PC-9 (cell line): ENCODE measurements at regions of chr20 and their contacts with region 1.

Region 1: DNA sequence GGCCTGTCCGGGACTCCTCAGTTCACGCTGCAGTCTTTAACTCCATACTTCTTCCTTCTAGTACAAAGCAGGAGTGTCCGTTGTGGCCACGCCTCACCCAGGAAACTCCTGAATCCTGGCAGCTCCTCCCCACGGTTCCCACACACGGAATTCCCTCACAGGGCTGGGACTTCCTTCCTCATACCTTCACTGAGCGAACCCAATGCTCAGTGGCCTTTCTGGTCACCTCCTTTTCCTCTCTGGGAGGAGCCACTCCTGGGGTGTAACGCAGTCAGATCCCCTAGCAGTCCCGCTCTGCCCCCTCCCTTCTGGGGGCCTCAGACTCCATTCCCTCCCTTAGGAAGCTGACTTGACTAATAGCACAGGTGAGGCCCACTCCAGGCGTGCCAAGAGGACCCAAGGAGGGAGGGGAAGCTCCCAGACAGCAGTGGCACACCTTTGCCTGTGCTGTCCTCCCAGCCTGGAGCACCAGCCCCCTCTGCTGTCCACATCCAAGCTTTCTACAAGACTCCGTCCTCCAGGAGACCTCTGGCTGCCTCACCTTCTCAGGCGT is at the start of gene SLC52A3:
- DNase-seq: peak; percentile 94 to 97
- H3K4me3 ChIP-seq: peak within 1 kb of the TSS; percentile 53
- H3K27ac ChIP-seq: peak within 1 kb of the TSS; percentile 70
- H3K4me1 ChIP-seq: peaks cover 35% of the 10 kb centered on the region
- H3K27me3 ChIP-seq: no peaks in the 10 kb centered on the region
- CTCF ChIP-seq: peak; percentile 83
- total RNA-seq, gene SLC52A3: 6.9 and 7.2 TPM in 2 replicates

Region 2: GRCh38 chr20:266596-267562 is 501.6 kb before region 1 on chr20:
- CTCF ChIA-PET with region 1: interaction called, 14 read pairs
- POLR2A ChIA-PET with region 1: no interaction called
- intact Hi-C with region 1: no loop called
- DNase-seq: peak; percentile 52 to 86
- H3K4me3 ChIP-seq: peak overlapping the region; percentile 30; the same call in 1 of the 2 replicates
- H3K27ac ChIP-seq: no peak overlapping the region
- H3K4me1 ChIP-seq: no peaks in the 10 kb centered on the region; the same call in 1 of the 2 replicates
- H3K27me3 ChIP-seq: peaks cover 30% of the 10 kb centered on the region
- CTCF ChIP-seq: peak; percentile 95

Region 3: GRCh38 chr20:354298-355064 is 414.0 kb before region 1 on chr20:
- CTCF ChIA-PET with region 1: no interaction called
- POLR2A ChIA-PET with region 1: no interaction called
- intact Hi-C with region 1: loop called (anchors 2 kb)
- DNase-seq: peak; percentile 59 to 80
- H3K4me3 ChIP-seq: no peak overlapping the region
- H3K27ac ChIP-seq: no peak overlapping the region
- H3K4me1 ChIP-seq: no peaks in the 10 kb centered on the region
- H3K27me3 ChIP-seq: no peaks in the 10 kb centered on the region
- CTCF ChIP-seq: peak; percentile 96

Region 4: DNA sequence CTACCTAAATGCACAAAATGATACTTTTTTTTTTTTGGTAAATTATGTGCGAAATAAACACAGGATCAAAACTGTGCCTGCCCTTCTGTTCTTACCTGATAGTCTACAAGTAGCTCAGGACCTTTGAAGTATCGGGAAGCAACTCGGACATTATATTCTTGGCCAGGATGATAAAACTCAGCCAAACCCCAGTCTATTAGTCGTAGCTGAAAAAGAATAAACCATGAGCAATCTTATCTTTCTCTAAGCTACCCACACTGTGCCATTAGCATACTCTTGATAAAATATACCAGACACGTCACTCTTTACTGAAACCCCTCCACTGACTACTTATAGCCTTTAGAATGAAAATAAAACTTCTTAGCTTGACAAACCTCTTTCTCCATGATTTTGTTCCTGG is 276.3 kb before region 1 on chr20:
- CTCF ChIA-PET with region 1: no interaction called
- POLR2A ChIA-PET with region 1: no interaction called
- intact Hi-C with region 1: loop called (anchors 5 kb)
- DNase-seq: no peak
- H3K4me3 ChIP-seq: no peak overlapping the region
- H3K27ac ChIP-seq: no peak overlapping the region
- H3K4me1 ChIP-seq: peaks cover 16% of the 10 kb centered on the region
- H3K27me3 ChIP-seq: no peaks in the 10 kb centered on the region
- CTCF ChIP-seq: no peak

Region 5: GRCh38 chr20:653110-653589 is 115.4 kb before region 1 on chr20 and contains the start of gene SRXN1:
- CTCF ChIA-PET with region 1: no interaction called
- POLR2A ChIA-PET with region 1: interaction called, 10 read pairs
- intact Hi-C with region 1: loop called (anchors 1 kb)
- DNase-seq: peak; percentile 76 to 94
- H3K4me3 ChIP-seq: peak within 1 kb of the TSS; percentile 94
- H3K27ac ChIP-seq: peak within 1 kb of the TSS; percentile 86
- H3K4me1 ChIP-seq: peaks cover 25% of the 10 kb centered on the region
- H3K27me3 ChIP-seq: no peaks in the 10 kb centered on the region
- CTCF ChIP-seq: peak; percentile 46; the same call in 1 of the 2 replicates
- total RNA-seq, gene SRXN1: 167 and 204 TPM in 2 replicates

Region 6: DNA sequence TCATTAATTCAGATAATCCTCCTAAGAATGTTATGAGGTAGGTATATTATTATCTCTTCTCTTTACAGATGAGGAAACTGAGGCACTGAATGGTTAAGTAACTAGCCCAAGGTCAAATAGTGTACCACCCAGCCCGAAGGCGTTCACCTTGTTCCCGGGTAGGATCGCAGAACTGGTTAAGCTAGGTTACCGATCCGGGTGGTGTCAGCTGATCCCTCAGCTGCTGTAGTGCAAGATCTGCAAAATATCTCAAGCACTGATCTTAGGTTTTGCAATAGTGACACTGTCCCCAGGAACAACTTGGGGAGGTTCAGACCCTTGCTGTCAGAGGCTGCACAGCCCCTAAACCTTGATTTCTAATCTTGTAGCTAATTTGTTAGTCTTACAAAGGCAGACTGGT is 28.4 kb before region 1 on chr20:
- CTCF ChIA-PET with region 1: interaction called, 17 read pairs
- POLR2A ChIA-PET with region 1: interaction called, 3 read pairs
- intact Hi-C with region 1: loop called (anchors 1 kb)
- DNase-seq: peak in 1 of 2 experiments; percentile 47
- H3K4me3 ChIP-seq: no peak overlapping the region
- H3K27ac ChIP-seq: no peak overlapping the region
- H3K4me1 ChIP-seq: peaks cover 16% of the 10 kb centered on the region
- H3K27me3 ChIP-seq: no peaks in the 10 kb centered on the region
- CTCF ChIP-seq: no peak

Region 7: DNA sequence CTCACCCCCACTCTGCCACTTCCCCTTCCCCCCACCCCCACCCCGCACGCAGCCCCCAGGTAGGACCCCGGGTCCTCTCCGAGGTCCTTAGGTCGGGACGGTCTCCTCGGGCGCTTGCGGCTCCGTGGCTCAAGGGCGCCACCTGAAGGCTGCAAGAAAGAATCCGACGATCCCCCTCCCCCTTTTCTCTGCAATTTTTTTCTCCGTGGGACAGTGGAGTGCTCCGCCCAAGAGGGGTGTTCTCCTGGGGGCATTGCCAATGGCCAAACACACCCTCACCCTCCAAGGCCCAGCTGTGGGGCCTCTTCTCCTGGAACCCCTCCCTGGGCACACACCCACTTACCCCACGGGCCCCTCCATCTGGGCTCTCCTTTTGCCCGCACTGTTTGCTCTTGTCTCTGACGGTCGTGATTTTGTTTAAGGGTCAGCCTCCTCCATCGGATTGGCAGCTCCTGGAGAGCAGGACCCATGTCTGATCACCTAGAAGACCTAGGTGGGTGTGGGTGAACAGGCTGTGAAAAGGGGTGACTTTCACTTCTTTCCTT is 417.4 kb after region 1 on chr20:
- CTCF ChIA-PET with region 1: no interaction called
- POLR2A ChIA-PET with region 1: no interaction called
- intact Hi-C with region 1: no loop called
- DNase-seq: peak in 1 of 2 experiments; percentile 56
- H3K4me3 ChIP-seq: 0 out of 2 replicates have a peak overlapping the region, but pooled peaks have one; percentile 11
- H3K27ac ChIP-seq: no peak overlapping the region
- H3K4me1 ChIP-seq: no peaks in the 10 kb centered on the region
- H3K27me3 ChIP-seq: peaks cover 29% of the 10 kb centered on the region
- CTCF ChIP-seq: peak; percentile 69